ENCODE measurements at regions of chr21 and their contacts with region 1.

Region 1: DNA sequence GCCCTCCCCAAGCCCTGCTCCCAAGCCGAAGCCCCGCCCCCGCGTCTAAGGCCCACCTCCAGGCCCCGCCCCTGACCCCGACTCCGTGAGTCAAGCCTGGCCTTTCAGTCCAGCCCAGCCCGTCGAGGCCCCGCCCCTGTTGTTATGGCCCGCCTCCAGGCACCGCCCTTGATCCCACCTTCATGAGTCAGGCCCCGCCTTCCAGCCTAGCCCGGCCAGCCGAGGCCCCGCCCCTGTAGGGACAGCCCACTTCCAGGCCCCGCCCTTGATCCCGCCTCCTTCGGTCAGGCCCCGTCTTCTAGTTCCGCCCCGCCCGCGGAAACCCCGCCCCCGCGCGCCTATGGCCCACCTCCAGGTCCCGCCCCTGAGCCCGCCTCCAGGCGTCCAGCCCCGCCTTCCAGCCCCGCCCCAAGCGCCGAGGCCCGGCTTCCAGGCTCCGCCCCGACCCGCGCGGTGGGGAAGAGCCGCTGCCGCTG is 247 bp upstream of the DOP1B start:
- DNase-seq: peak; percentile 99
- ATAC-seq: peak; percentile 81 to 83
- H3K4me3 ChIP-seq: peak overlapping the region; percentile 73 to 99 (median 82)
- H3K27ac ChIP-seq: peak overlapping the region; percentile 87 to 96 (median 91)
- H3K4me1 ChIP-seq: peaks cover 15 to 17% of the 10 kb centered on the region in 2 donors
- H3K27me3 ChIP-seq: no peaks in the 10 kb centered on the region
- CTCF ChIP-seq: no peak
- POLR2A ChIP-seq: no peak

Region 2: GRCh38 chr21:36069713-36070573 is 86.4 kb before region 1 on chr21 and contains the start of gene CBR1:
- in situ Hi-C with region 1: no loop called
- intact Hi-C with region 1: loop called (anchors 1 kb)
- DNase-seq: peak; percentile 87 to 95
- ATAC-seq: peak; percentile 93 to 95
- H3K4me3 ChIP-seq: peak within 1 kb of the TSS; percentile 82 to 94 (median 92)
- H3K27ac ChIP-seq: peak within 1 kb of the TSS; percentile 75 to 90 (median 79)
- H3K4me1 ChIP-seq: peaks cover 39% of the 10 kb centered on the region in 2 donors
- H3K27me3 ChIP-seq: no peaks in the 10 kb centered on the region
- CTCF ChIP-seq: peak in 1 of 5 experiments; percentile 24
- POLR2A ChIP-seq: peak; percentile 59 to 66
- total RNA-seq, gene CBR1: 44.8 to 73.9 (median 66.4) TPM

Region 3: DNA sequence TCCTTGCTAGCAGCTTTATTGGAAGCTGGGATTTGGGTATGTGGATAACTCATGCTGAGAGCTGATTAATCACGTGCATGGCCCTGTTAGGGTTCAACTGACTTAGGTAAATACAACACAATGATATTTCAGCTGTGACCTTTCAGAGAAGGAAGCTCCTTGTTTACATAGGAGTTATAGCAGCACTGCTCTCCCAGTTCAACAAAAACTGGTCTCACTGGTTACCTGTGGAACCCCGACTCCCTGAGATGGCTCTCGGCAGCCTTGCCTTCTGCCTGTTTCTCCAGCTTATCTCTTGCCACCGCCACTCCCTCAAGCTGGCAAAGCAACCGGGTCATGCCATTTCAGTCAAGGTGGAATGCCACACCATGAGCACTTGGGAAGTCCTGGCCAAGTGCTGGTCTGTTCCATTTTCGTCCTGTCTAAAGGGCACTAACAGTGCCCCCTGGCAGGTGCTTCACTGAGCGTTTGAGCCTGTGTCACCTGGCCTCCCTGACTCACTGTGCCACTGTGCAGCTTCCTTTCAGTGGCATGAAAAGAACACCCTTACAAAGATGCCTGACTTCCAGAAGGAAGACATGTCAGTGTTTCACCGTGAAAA is 31.8 kb after region 1 on chr21:
- in situ Hi-C with region 1: no loop called
- intact Hi-C with region 1: loop called (anchors 2 kb)
- DNase-seq: peak; percentile 84 to 95
- ATAC-seq: peak; percentile 97 to 98
- H3K4me3 ChIP-seq: no peak overlapping the region
- H3K27ac ChIP-seq: peak overlapping the region; percentile 68 to 79 (median 74)
- H3K4me1 ChIP-seq: peaks cover 13 to 23% of the 10 kb centered on the region in 2 donors
- H3K27me3 ChIP-seq: no peaks in the 10 kb centered on the region
- CTCF ChIP-seq: no peak
- POLR2A ChIP-seq: no peak

Region 4: DNA sequence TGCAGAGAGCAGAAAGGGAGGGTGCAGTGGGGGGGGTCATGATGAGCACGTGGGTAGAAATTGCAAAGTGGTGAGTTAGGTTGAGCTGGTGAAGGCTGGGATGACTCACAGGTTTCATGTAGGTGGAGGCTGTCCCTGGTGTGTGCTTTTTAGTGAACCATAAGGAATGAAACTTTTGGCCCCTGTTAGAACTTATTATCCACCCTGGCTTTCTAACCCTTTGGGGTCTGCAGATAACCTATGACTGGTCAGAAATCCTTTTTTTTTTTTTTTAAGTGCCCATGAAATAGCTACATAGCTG is 47.2 kb after region 1 on chr21:
- in situ Hi-C with region 1: no loop called
- intact Hi-C with region 1: loop called (anchors 1 kb)
- DNase-seq: peak; percentile 51 to 55
- ATAC-seq: peak; percentile 44 to 48
- H3K4me3 ChIP-seq: no peak overlapping the region
- H3K27ac ChIP-seq: peak overlapping the region; percentile 85 to 92 (median 90)
- H3K4me1 ChIP-seq: peaks cover 29 to 40% of the 10 kb centered on the region in 2 donors
- H3K27me3 ChIP-seq: no peaks in the 10 kb centered on the region
- CTCF ChIP-seq: no peak
- POLR2A ChIP-seq: no peak

Measured in gastrocnemius medialis (tissue), 4 donors.